Adrenal gland (tissue), 19 donors: ENCODE measurements at regions of chr12 and their contacts with region 1.

Region 1: GRCh38 chr12:14260011-14260993 is 105.2 kb upstream of the ATF7IP start:
- DNase-seq: peak; percentile 75 to 93 (median 85)
- H3K4me3 ChIP-seq: peak overlapping the region in 1 of 4 donors; percentile 37
- H3K27ac ChIP-seq: peak overlapping the region; percentile 7 to 89 (median 60)
- H3K4me1 ChIP-seq: peaks cover 24 to 45% of the 10 kb centered on the region in 2 donors
- H3K27me3 ChIP-seq: no peaks in the 10 kb centered on the region
- CTCF ChIP-seq: no peak
- POLR2A ChIP-seq: no peak

Region 2: GRCh38 chr12:14167005-14167628 is 93.2 kb before region 1 on chr12:
- intact Hi-C with region 1: no loop called
- DNase-seq: peak; percentile 16 to 68 (median 44)
- H3K4me3 ChIP-seq: no peak overlapping the region
- H3K27ac ChIP-seq: no peak overlapping the region
- H3K4me1 ChIP-seq: no peaks in the 10 kb centered on the region
- H3K27me3 ChIP-seq: no peaks in the 10 kb centered on the region
- CTCF ChIP-seq: peak; percentile 79 to 96 (median 86)
- POLR2A ChIP-seq: no peak

Region 3: GRCh38 chr12:14216405-14217294 is 43.7 kb before region 1 on chr12:
- intact Hi-C with region 1: no loop called
- DNase-seq: no peak
- H3K4me3 ChIP-seq: peak overlapping the region in 1 of 4 donors; percentile 22
- H3K27ac ChIP-seq: no peak overlapping the region
- H3K4me1 ChIP-seq: peaks cover 0 to 11% of the 10 kb centered on the region in 2 donors
- H3K27me3 ChIP-seq: no peaks in the 10 kb centered on the region
- CTCF ChIP-seq: no peak
- POLR2A ChIP-seq: no peak

Region 4: GRCh38 chr12:14356147-14356546 is 95.8 kb after region 1 on chr12:
- intact Hi-C with region 1: loop called in 1 of 2 experiments (anchors 5 kb)
- DNase-seq: no peak
- H3K4me3 ChIP-seq: no peak overlapping the region
- H3K27ac ChIP-seq: no peak overlapping the region
- H3K4me1 ChIP-seq: no peaks in the 10 kb centered on the region
- H3K27me3 ChIP-seq: no peaks in the 10 kb centered on the region
- CTCF ChIP-seq: no peak
- POLR2A ChIP-seq: no peak

Region 5: DNA sequence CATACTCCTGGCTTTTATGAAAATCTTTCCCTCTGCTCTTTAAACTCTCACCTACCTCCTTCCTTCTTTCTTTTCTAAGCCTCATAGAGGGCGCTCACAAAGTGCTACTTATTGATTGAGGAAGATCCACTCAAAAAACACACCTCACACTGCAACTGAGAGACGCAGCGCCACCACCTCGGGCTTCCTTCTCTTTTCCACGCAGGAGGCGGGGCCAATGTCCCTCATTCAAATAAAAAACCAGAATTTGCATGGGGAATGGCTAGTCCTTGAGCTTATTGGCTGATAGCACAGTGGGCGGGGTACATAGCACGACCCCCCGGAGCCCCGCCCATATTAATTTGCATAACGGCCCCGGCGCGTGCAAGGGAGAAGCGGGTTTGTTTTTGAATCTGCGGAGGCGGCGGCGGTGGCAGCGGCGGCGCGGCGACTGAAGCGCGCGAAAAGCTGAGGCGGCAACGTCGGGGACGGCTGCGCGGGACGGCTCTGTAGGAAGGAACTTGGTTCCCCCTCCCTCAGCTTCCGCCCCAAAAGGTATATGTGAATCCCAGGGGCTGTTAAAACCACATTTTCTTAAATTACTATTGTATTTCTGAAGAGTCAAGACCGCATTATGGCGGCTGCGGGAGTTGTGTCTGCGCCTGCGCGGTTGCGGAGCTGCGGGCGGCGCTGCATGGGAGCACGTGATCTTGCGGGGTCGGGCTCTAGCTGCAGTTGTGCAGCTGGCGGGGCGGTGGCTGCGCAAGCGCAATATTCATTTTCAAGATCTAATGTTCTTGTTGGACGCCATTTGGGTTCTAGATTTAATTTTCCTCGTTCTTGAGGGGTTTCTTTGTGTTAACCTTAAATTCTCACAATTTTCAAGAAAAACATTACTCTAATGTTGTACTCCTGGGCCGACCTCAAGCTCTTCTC is 105.2 kb after region 1 on chr12 and contains the start of gene ATF7IP:
- intact Hi-C with region 1: loop called in 1 of 2 experiments (anchors 5 kb)
- DNase-seq: peak; percentile 93 to 98 (median 97)
- H3K4me3 ChIP-seq: peak within 1 kb of the TSS; percentile 17 to 87 (median 68)
- H3K27ac ChIP-seq: peak within 1 kb of the TSS; percentile 87 to 97 (median 94)
- H3K4me1 ChIP-seq: peaks cover 0 to 29% of the 10 kb centered on the region in 2 donors
- H3K27me3 ChIP-seq: no peaks in the 10 kb centered on the region
- CTCF ChIP-seq: peak in 3 of 6 experiments; percentile 16 to 20 (median 18)
- POLR2A ChIP-seq: peak; percentile 64 to 94
- total RNA-seq, gene ATF7IP: 40.5 to 101 (median 49.2) TPM